ENCODE measurements at regions of chr6 and their contacts with region 1.

Region 1: GRCh38 chr6:64914134-64914533 is 792.9 kb downstream of the EYS start:
- DNase-seq: no peak
- ATAC-seq: no peak
- H3K4me3 ChIP-seq: no peak overlapping the region
- H3K27ac ChIP-seq: no peak overlapping the region
- H3K4me1 ChIP-seq: no peaks in the 10 kb centered on the region
- H3K27me3 ChIP-seq: no peaks in the 10 kb centered on the region
- CTCF ChIP-seq: no peak
- POLR2A ChIP-seq: no peak
- RAD21 ChIP-seq: no peak

Region 2: DNA sequence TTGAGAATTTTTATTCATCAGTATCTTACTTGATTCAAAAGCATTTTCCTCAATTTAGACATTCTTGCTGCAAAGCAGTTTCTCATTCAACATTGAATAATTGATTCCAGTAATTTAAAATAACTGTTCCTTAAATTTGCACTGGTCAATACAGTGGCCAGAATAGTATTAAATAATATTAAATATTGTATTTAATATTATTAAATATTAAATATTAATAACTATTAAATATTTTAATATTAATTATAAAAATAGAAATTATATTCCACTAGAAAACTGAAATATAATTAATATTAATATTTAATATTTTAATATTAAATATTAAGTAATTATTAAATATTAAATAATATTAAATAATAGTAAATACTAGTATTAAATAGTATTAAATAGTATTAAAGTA is 34.1 kb after region 1 on chr6:
- CTCF ChIA-PET with region 1: no interaction called
- POLR2A ChIA-PET with region 1: no interaction called
- RAD21 ChIA-PET with region 1: no interaction called
- intact Hi-C with region 1: loop called (anchors 1 kb)
- DNase-seq: no peak
- ATAC-seq: no peak
- H3K4me3 ChIP-seq: no peak overlapping the region
- H3K27ac ChIP-seq: no peak overlapping the region
- H3K4me1 ChIP-seq: no peaks in the 10 kb centered on the region
- H3K27me3 ChIP-seq: no peaks in the 10 kb centered on the region
- CTCF ChIP-seq: no peak
- POLR2A ChIP-seq: no peak
- RAD21 ChIP-seq: no peak

Measured in HCT116 (cell line).